ENCODE measurements at regions of chr19 and their contacts with region 1.

Region 1: DNA sequence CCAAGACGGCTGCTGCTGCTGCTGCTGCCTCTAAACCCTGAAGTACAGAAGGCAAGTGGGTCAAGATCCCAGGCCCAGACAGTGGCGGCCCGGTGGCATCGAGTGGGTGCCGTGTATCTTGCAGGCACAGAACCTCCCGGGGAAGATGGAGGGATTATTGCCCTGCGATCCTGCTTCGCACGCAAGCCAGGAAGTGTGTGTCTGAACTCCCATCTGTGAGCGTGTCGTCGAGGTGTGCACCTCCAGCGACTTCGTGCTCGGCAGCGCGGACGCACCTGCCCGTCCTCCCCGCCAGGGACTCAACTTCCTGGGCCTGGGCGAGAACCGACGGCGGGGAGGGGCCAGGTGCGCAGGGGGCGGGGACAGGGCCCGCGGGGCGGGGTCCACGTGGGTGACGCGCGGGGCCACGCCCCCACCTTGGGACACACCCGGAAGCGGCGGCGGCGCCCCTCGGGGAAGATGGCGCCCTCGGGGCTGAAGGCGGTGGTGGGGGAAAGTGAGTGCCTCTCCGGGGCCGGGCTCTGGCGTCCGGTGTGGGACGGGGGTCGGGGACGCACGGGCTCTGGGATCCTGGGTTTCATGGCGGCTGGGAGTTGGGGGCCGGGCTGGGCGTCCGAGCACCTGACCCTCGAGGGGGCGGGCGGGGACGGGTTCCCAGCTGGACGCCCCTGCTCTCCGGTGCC is at the start of gene STXBP2:
- DNase-seq: peak; percentile 35
- ATAC-seq: peak; percentile 95
- H3K4me3 ChIP-seq: peak within 1 kb of the TSS; percentile 99
- H3K27ac ChIP-seq: peak within 1 kb of the TSS; percentile 75
- H3K4me1 ChIP-seq: peaks cover 14% of the 10 kb centered on the region
- H3K27me3 ChIP-seq: no peaks in the 10 kb centered on the region
- CTCF ChIP-seq: no peak
- EP300 ChIP-seq: no peak
- POLR2A ChIP-seq: peak; percentile 92
- RAD21 ChIP-seq: no peak
- polyA plus RNA-seq, gene STXBP2: 2.6 to 11.9 TPM

Region 2: GRCh38 chr19:7652061-7652641 is 15.3 kb after region 1 on chr19:
- CTCF ChIA-PET with region 1: interaction called, 12 read pairs
- POLR2A ChIA-PET with region 1: interaction called, 4 read pairs
- RAD21 ChIA-PET with region 1: no interaction called
- SMC1A ChIA-PET with region 1: no interaction called
- in situ Hi-C with region 1: no loop called
- intact Hi-C with region 1: no loop called
- DNase-seq: peak; percentile 48
- ATAC-seq: peak; percentile 87
- H3K4me3 ChIP-seq: no peak overlapping the region
- H3K27ac ChIP-seq: no peak overlapping the region
- H3K4me1 ChIP-seq: peaks cover 7% of the 10 kb centered on the region
- H3K27me3 ChIP-seq: no peaks in the 10 kb centered on the region; a peak in 1 of 4 replicates
- CTCF ChIP-seq: peak; percentile 91 to 97 (median 95)
- EP300 ChIP-seq: no peak
- POLR2A ChIP-seq: no peak
- RAD21 ChIP-seq: peak; percentile 60

Region 3: GRCh38 chr19:7961921-7962626 is 325.2 kb after region 1 on chr19:
- CTCF ChIA-PET with region 1: no interaction called
- POLR2A ChIA-PET with region 1: no interaction called
- RAD21 ChIA-PET with region 1: no interaction called
- SMC1A ChIA-PET with region 1: no interaction called
- in situ Hi-C with region 1: no loop called
- intact Hi-C with region 1: no loop called
- DNase-seq: no peak
- ATAC-seq: no peak
- H3K4me3 ChIP-seq: no peak overlapping the region
- H3K27ac ChIP-seq: no peak overlapping the region
- H3K4me1 ChIP-seq: no peaks in the 10 kb centered on the region
- H3K27me3 ChIP-seq: no peaks in the 10 kb centered on the region
- CTCF ChIP-seq: no peak
- EP300 ChIP-seq: no peak
- POLR2A ChIP-seq: no peak
- RAD21 ChIP-seq: no peak

Measured in GM12878 (cell line).